ENCODE measurements at regions of chr6 and their contacts with region 1.

Region 1: GRCh38 chr6:89819336-89820130 is at the start of gene MDN1:
- DNase-seq: peak; percentile 76
- ATAC-seq: peak; percentile 94
- H3K4me3 Mint-ChIP-seq: peak within 1 kb of the TSS; percentile 95
- H3K27ac Mint-ChIP-seq: peak within 1 kb of the TSS; percentile 95
- H3K4me1 Mint-ChIP-seq: peaks cover 33% of the 10 kb centered on the region
- H3K27me3 Mint-ChIP-seq: no peaks in the 10 kb centered on the region
- CTCF ChIP-seq: no peak
- total RNA-seq, gene MDN1: 59.8 and 65.4 TPM in 2 replicates

Region 2: DNA sequence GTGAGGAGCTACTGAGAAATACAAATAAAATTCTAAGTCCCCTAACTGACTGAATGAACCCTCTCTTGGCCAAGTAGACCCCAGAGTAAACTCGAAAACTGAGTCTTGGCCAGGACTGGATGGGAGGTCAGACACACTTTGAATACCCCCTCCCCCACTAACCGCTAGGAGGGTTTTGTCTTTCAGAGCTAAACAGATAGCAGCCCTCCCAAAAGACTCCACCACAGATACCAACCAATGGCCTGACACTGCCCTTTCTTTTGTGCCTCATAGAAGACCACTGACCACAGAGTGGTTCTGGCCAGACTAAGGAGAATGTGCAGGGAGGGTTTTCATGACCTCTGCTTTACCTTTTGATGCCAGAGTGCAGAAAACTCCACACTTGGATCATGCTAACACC is 1729.8 kb before region 1 on chr6:
- CTCF ChIA-PET with region 1: no interaction called
- POLR2A ChIA-PET with region 1: no interaction called
- intact Hi-C with region 1: no loop called
- DNase-seq: no peak
- ATAC-seq: no peak
- H3K4me3 Mint-ChIP-seq: no peak overlapping the region
- H3K27ac Mint-ChIP-seq: no peak overlapping the region
- H3K4me1 Mint-ChIP-seq: no peaks in the 10 kb centered on the region
- H3K27me3 Mint-ChIP-seq: peaks cover 3% of the 10 kb centered on the region
- CTCF ChIP-seq: no peak

Region 3: GRCh38 chr6:89145787-89146646 is 673.5 kb before region 1 on chr6 and contains the start of gene PM20D2:
- CTCF ChIA-PET with region 1: no interaction called
- POLR2A ChIA-PET with region 1: no interaction called
- intact Hi-C with region 1: loop called (anchors 1 kb)
- DNase-seq: peak; percentile 72
- ATAC-seq: peak; percentile 78
- H3K4me3 Mint-ChIP-seq: peak within 1 kb of the TSS; percentile 90
- H3K27ac Mint-ChIP-seq: peak within 1 kb of the TSS; percentile 92
- H3K4me1 Mint-ChIP-seq: peaks cover 22% of the 10 kb centered on the region
- H3K27me3 Mint-ChIP-seq: no peaks in the 10 kb centered on the region
- CTCF ChIP-seq: no peak
- total RNA-seq, gene PM20D2: 10.9 and 11.6 TPM in 2 replicates

Region 4: DNA sequence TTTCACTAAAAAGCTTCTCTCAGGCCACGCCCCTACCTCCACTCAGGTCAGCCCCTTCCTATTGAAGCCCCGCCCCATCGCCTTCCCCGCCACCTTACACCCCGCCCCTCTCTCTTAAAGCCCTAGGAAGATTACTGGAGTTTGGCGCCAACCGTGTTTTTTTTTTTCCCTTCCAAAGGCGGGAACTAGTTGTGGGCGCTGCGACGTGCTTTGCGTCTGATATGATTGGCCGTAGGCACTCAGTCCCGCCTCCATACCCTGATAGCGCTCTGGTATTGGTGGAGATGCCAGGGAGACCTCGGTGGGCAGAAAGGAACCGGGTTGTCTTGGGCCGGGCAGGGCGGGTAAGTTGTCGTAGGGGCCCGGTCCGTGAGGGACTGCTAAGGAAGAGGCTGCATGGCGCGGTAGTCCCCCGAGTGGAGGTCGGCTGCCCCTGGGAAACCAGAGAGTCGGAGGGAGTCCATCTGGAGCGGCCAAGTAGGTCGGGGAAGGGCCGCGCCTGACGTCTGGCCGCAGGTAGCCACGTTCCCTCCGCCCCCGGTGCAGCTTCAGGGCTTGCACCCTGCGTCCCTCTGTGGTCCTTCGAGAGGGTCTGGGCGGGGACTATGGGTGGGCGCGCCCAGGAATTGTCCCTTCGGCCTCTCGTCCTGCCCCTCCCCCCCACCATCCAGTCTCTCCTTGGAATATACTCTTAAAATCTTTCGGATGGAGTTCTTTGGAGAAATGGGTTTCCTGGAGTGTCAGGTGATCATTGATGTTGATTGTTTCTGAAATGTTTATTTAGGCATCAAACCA is 10.3 kb after region 1 on chr6 and contains the start of gene CASP8AP2:
- CTCF ChIA-PET with region 1: interaction called, 16 read pairs
- POLR2A ChIA-PET with region 1: interaction called, 87 read pairs
- intact Hi-C with region 1: loop called (anchors 1 kb)
- DNase-seq: peak; percentile 76
- ATAC-seq: peak; percentile 93
- H3K4me3 Mint-ChIP-seq: peak within 1 kb of the TSS; percentile 99
- H3K27ac Mint-ChIP-seq: peak within 1 kb of the TSS; percentile 96
- H3K4me1 Mint-ChIP-seq: peaks cover 37% of the 10 kb centered on the region
- H3K27me3 Mint-ChIP-seq: no peaks in the 10 kb centered on the region
- CTCF ChIP-seq: no peak
- total RNA-seq, gene CASP8AP2: 17.1 and 17.8 TPM in 2 replicates

Region 5: DNA sequence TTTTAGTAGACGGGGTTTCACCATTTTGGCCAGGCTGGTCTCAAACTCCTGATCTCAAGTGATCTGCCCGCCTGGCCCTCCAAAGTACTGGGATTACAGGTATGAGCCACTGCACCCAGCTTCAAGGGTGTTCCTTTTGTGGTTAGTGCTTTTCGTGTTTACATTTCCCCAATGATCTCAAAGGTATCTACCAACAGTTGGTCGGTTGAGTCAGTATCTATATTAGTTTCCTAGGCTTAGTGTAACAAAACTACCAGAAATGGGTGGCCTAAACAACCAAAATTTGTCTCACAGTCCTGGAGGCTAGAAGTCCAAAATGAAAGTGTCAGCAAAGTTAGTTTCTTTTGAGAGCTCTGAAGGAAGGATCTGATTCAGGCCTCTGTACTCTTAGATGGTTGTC is 40.2 kb after region 1 on chr6:
- CTCF ChIA-PET with region 1: no interaction called
- POLR2A ChIA-PET with region 1: interaction called, 6 read pairs
- intact Hi-C with region 1: loop called (anchors 5 kb)
- DNase-seq: no peak
- ATAC-seq: no peak
- H3K4me3 Mint-ChIP-seq: no peak overlapping the region
- H3K27ac Mint-ChIP-seq: no peak overlapping the region
- H3K4me1 Mint-ChIP-seq: peaks cover 18% of the 10 kb centered on the region
- H3K27me3 Mint-ChIP-seq: no peaks in the 10 kb centered on the region
- CTCF ChIP-seq: no peak

Region 6: GRCh38 chr6:90478789-90479602 is 659.5 kb after region 1 on chr6:
- CTCF ChIA-PET with region 1: no interaction called
- POLR2A ChIA-PET with region 1: no interaction called
- intact Hi-C with region 1: loop called (anchors 1 kb)
- DNase-seq: peak; percentile 54
- ATAC-seq: peak; percentile 96
- H3K4me3 Mint-ChIP-seq: no peak overlapping the region
- H3K27ac Mint-ChIP-seq: peak overlapping the region; percentile 64
- H3K4me1 Mint-ChIP-seq: peaks cover 22% of the 10 kb centered on the region
- H3K27me3 Mint-ChIP-seq: no peaks in the 10 kb centered on the region
- CTCF ChIP-seq: peak; percentile 95